HepG2 (cell line): ENCODE measurements at regions of chr11 and their contacts with region 1.

Region 1: GRCh38 chr11:112024773-112025678 is at the start of gene DLAT:
- DNase-seq: peak; percentile 85
- ATAC-seq: peak; percentile 88
- H3K4me3 ChIP-seq: peak within 1 kb of the TSS; percentile 82 to 90 (median 87)
- H3K27ac ChIP-seq: peak within 1 kb of the TSS; percentile 90
- H3K4me1 ChIP-seq: peaks cover 17% of the 10 kb centered on the region
- H3K27me3 ChIP-seq: no peaks in the 10 kb centered on the region; a peak in 2 of 5 replicates
- CTCF ChIP-seq: 0 out of 2 replicates have a peak, but pooled peaks have one; percentile 13
- EP300 ChIP-seq: no peak
- POLR2A ChIP-seq: peak; percentile 57 to 59
- RAD21 ChIP-seq: no peak; the same call in 1 of the 2 replicates
- total RNA-seq, gene DLAT: 62.2 and 73.2 TPM in 2 replicates

Region 2: DNA sequence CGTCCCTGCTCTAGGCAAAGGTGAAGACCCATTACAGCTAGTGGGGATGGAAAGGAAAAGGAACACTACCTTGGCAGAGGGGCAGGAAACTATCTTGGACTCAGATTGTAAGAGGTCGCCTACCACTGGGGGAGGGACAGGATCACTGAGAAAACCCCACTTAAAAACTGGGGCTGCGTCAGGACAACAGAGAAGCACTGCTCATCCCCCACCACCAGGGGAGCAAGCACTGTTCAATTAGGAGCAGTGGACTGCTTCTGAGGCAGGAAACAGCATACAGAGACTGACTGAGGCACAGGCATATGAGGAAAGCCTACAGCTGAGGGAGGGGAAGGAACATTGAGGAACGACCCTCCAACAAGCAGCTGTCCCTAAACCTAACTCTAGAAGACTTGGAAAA is 20.6 kb before region 1 on chr11:
- CTCF ChIA-PET with region 1: no interaction called
- POLR2A ChIA-PET with region 1: interaction called, 14 read pairs
- in situ Hi-C with region 1: no loop called
- intact Hi-C with region 1: no loop called
- DNase-seq: peak; percentile 15
- ATAC-seq: peak; percentile 85
- H3K4me3 ChIP-seq: no peak overlapping the region
- H3K27ac ChIP-seq: no peak overlapping the region
- H3K4me1 ChIP-seq: peaks cover 20% of the 10 kb centered on the region
- H3K27me3 ChIP-seq: no peaks in the 10 kb centered on the region
- CTCF ChIP-seq: peak; percentile 51
- EP300 ChIP-seq: no peak
- POLR2A ChIP-seq: no peak
- RAD21 ChIP-seq: no peak

Region 3: DNA sequence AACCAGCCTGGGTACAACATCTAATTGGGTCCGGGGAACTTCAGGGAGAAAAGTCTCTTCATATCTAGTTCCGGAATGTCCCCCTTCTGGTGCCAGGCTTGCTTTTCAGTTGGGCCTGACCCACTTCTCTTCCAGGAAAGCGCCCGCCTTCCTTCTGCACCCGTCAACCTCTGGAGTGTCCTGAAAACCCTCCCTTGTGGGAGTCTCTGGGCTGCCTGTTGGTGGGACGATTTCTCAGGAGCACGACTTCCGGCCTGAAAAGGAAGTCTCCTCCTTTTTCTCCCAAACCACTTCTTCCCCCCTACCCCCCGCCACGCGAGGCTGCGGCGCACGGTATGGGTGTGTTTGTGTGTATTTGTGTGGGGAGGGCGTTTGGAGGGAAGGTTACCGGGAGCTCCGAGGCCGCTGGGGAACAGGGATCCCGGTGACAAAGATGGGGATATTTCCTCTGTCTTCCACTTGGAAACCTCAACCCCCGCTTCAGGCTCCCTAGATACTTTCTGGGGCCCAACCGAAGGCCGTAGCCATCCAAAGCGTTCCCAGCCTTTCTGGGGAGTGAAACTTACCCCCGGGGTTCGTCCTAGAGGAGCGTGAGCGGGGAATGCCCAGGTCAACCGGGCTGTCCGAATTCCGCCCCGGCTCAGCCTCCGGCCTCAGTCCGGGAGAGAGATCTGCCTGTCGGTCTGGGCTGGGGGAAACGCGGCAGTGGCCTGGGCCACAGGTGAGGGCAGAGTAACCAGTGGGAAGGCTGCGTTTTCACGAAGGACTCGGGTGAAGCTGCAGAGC is 49.2 kb after region 1 on chr11 and contains the start of gene NKAPD1:
- CTCF ChIA-PET with region 1: no interaction called
- POLR2A ChIA-PET with region 1: no interaction called
- in situ Hi-C with region 1: no loop called
- intact Hi-C with region 1: loop called (anchors 5 kb)
- DNase-seq: peak; percentile 85
- ATAC-seq: peak; percentile 91
- H3K4me3 ChIP-seq: peak within 1 kb of the TSS; percentile 81 to 99 (median 99)
- H3K27ac ChIP-seq: peak within 1 kb of the TSS; percentile 99
- H3K4me1 ChIP-seq: peaks cover 15% of the 10 kb centered on the region
- H3K27me3 ChIP-seq: no peaks in the 10 kb centered on the region; a peak in 1 of 5 replicates
- CTCF ChIP-seq: no peak
- EP300 ChIP-seq: no peak
- POLR2A ChIP-seq: peak in 1 of 2 experiments; percentile 60; a peak in 3 of 4 replicates
- RAD21 ChIP-seq: no peak
- total RNA-seq, gene NKAPD1: 22.5 and 31.8 TPM in 2 replicates